ENCODE measurements at regions of chr4 and their contacts with region 1.

Region 1: GRCh38 chr4:155629183-155629825 is 37.3 kb upstream of the GUCY1A1 start:
- DNase-seq: no peak
- ATAC-seq: peak; percentile 19; the same call in 2 of the 3 replicates
- H3K4me3 ChIP-seq: no peak overlapping the region
- H3K27ac ChIP-seq: no peak overlapping the region
- H3K4me1 ChIP-seq: no peaks in the 10 kb centered on the region
- H3K27me3 ChIP-seq: no peaks in the 10 kb centered on the region
- CTCF ChIP-seq: no peak
- EP300 ChIP-seq: no peak
- POLR2A ChIP-seq: no peak
- RAD21 ChIP-seq: no peak

Region 2: DNA sequence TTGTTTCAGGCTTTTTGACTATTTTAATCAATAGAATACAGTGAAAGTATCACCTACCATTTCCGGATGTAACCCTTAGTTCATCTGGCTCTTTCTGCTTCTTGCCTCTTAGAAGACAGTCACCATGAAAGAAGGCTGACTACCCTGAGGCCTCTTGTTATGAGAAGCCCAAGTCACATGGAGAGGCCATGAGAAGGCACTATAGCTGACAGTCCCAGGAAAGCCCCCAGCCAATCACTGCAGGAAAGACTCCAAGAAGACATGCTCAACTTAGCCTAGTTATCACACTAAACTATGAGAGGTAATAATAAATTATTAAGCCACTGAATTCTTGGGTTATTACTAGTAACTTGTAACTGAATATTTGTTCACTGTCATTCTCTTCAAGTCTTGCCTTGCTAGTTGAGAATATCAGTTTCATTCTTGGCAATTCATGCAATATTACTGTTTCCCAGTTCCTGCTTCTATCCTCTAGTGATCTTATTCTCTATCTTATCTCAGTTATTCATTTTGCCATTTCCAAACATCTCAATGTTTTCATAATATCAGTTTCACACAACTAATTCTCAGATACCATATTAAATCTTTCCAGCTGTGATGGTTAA is 19.7 kb before region 1 on chr4:
- CTCF ChIA-PET with region 1: interaction called, 5 read pairs
- POLR2A ChIA-PET with region 1: interaction called, 6 read pairs
- RAD21 ChIA-PET with region 1: interaction called, 10 read pairs
- SMC1A ChIA-PET with region 1: interaction called, 50 read pairs
- in situ Hi-C with region 1: no loop called
- intact Hi-C with region 1: no loop called
- DNase-seq: no peak
- ATAC-seq: peak; percentile 92
- H3K4me3 ChIP-seq: no peak overlapping the region
- H3K27ac ChIP-seq: no peak overlapping the region
- H3K4me1 ChIP-seq: no peaks in the 10 kb centered on the region
- H3K27me3 ChIP-seq: no peaks in the 10 kb centered on the region; a peak in 1 of 4 replicates
- CTCF ChIP-seq: no peak
- EP300 ChIP-seq: peak in 1 of 2 experiments; percentile 5; a peak in 1 of 4 replicates
- POLR2A ChIP-seq: no peak
- RAD21 ChIP-seq: no peak

Region 3: DNA sequence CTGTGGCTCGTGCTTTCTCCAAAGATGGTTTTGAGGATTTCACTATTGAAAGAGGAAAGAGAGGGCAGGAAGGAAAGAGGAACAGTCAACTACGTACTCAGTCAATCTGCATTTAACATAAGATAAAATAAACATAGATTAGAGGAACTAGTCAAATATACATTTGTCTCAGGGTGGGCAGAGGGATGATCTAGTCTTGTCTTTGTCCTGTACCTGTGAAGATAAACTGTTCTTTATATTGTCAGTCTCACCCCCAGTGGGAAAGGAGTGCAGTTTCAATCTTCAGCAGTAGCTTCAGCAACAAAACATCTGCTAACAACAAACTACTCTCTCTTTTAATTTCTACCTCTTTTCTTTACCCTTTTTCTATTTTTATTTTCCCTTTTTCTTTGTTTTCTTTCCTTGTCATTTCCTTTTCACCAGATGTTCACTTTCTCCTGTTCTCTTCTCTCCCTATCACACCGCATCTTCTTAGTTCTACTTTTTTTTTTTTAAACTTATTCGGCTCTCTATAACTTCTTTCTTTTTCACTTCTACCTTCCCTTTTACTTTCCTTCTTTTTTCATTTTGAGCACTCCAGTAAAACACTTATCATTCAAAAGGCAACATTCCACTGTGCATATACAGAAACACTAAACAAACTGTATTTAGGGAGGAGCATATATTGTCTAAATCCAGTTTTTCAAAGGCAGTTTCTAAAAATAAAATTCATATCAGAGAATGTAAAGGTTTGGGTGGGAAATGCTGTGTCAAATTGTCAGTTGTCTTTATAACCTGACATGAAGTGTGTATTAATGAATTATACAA is 14.0 kb before region 1 on chr4:
- CTCF ChIA-PET with region 1: interaction called, 5 read pairs
- POLR2A ChIA-PET with region 1: interaction called, 5 read pairs
- RAD21 ChIA-PET with region 1: interaction called, 17 read pairs
- SMC1A ChIA-PET with region 1: interaction called, 50 read pairs
- in situ Hi-C with region 1: no loop called
- intact Hi-C with region 1: no loop called
- DNase-seq: no peak
- ATAC-seq: peak; percentile 70
- H3K4me3 ChIP-seq: no peak overlapping the region
- H3K27ac ChIP-seq: no peak overlapping the region
- H3K4me1 ChIP-seq: no peaks in the 10 kb centered on the region
- H3K27me3 ChIP-seq: no peaks in the 10 kb centered on the region; a peak in 1 of 4 replicates
- CTCF ChIP-seq: no peak
- EP300 ChIP-seq: no peak
- POLR2A ChIP-seq: no peak
- RAD21 ChIP-seq: no peak

Region 4: GRCh38 chr4:155639704-155640523 is 10.6 kb after region 1 on chr4:
- CTCF ChIA-PET with region 1: interaction called, 12 read pairs
- POLR2A ChIA-PET with region 1: interaction called, 18 read pairs
- RAD21 ChIA-PET with region 1: interaction called, 23 read pairs
- SMC1A ChIA-PET with region 1: interaction called, 52 read pairs
- in situ Hi-C with region 1: no loop called
- intact Hi-C with region 1: no loop called
- DNase-seq: peak; percentile 45
- ATAC-seq: peak; percentile 85
- H3K4me3 ChIP-seq: no peak overlapping the region
- H3K27ac ChIP-seq: no peak overlapping the region
- H3K4me1 ChIP-seq: peaks cover 7% of the 10 kb centered on the region
- H3K27me3 ChIP-seq: no peaks in the 10 kb centered on the region
- CTCF ChIP-seq: no peak
- EP300 ChIP-seq: no peak
- POLR2A ChIP-seq: no peak
- RAD21 ChIP-seq: no peak

Region 5: DNA sequence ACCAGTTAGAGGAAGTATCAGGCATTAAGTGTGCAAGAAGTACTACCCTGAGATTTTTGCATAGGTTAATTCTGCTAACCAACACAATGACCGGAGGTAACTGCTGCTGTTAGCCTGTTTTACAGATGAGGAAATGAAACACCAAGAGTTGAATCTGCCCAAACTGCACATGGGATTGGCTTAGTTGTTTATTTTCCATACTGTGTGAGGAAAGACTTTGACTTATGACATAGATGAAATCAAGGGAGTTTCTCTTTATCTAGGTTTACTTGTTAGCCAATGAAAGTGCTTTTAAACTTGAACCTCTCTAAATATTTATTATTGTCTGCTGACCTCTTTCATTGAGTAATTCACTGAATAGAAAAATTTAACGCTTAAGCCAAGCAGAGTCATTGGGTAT is 139.8 kb after region 1 on chr4:
- CTCF ChIA-PET with region 1: interaction called, 4 read pairs
- POLR2A ChIA-PET with region 1: interaction called, 4 read pairs
- RAD21 ChIA-PET with region 1: interaction called, 5 read pairs
- SMC1A ChIA-PET with region 1: interaction called, 13 read pairs
- in situ Hi-C with region 1: no loop called
- intact Hi-C with region 1: no loop called
- DNase-seq: no peak
- ATAC-seq: peak; percentile 86
- H3K4me3 ChIP-seq: no peak overlapping the region
- H3K27ac ChIP-seq: no peak overlapping the region
- H3K4me1 ChIP-seq: no peaks in the 10 kb centered on the region
- H3K27me3 ChIP-seq: no peaks in the 10 kb centered on the region
- CTCF ChIP-seq: no peak
- EP300 ChIP-seq: no peak
- POLR2A ChIP-seq: no peak
- RAD21 ChIP-seq: no peak

Measured in GM12878 (cell line).